ENCODE measurements at regions of chr11 and their contacts with region 1.

Region 1: DNA sequence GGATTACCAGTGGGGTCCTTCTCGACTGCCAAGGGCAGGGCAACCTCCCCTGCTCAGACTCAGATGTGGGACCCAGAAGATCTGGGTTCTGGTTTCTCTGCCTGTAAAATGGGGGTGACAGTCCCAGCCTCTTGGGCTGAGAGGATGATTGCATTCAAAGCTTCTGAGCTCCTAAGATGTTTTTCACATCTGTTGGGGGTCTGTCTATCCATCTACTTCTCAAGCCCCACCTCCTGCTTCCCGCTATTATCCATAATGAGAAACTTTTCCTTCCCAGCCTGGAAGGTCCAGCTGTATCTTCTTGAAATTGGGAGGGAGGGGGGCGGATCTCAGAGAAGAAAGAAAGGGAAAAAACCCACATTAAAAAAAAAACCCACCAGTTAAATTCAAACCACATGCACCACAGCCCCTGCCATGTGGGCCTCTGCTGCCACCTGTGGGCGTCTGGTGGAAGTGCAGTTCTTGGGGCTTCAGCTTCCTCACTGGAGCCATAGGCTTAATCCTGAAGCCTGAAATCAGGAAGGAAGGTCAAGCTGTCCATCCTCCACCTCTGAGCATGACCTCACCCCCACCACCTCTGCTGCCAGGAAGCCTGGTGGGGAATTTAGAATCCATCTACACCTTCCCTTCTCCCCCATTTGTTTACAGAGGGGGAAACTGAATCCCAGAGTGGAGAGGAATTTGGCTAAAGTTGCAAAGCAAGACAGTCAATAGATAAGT is 27.3 kb downstream of the ARHGEF17 start:
- DNase-seq: peak; percentile 88
- H3K4me3 ChIP-seq: no peak overlapping the region
- H3K27ac ChIP-seq: peak overlapping the region; percentile 70
- H3K4me1 ChIP-seq: peaks cover 33% of the 10 kb centered on the region
- H3K27me3 ChIP-seq: no peaks in the 10 kb centered on the region
- CTCF ChIP-seq: peak; percentile 95 to 96
- POLR2A ChIP-seq: no peak

Region 2: GRCh38 chr11:73126804-73127480 is 208.4 kb before region 1 on chr11:
- CTCF ChIA-PET with region 1: no interaction called
- POLR2A ChIA-PET with region 1: no interaction called
- dilution Hi-C with region 1: no loop called
- intact Hi-C with region 1: no loop called
- DNase-seq: no peak
- H3K4me3 ChIP-seq: no peak overlapping the region
- H3K27ac ChIP-seq: no peak overlapping the region
- H3K4me1 ChIP-seq: no peaks in the 10 kb centered on the region
- H3K27me3 ChIP-seq: no peaks in the 10 kb centered on the region
- CTCF ChIP-seq: no peak
- POLR2A ChIP-seq: no peak

Region 3: DNA sequence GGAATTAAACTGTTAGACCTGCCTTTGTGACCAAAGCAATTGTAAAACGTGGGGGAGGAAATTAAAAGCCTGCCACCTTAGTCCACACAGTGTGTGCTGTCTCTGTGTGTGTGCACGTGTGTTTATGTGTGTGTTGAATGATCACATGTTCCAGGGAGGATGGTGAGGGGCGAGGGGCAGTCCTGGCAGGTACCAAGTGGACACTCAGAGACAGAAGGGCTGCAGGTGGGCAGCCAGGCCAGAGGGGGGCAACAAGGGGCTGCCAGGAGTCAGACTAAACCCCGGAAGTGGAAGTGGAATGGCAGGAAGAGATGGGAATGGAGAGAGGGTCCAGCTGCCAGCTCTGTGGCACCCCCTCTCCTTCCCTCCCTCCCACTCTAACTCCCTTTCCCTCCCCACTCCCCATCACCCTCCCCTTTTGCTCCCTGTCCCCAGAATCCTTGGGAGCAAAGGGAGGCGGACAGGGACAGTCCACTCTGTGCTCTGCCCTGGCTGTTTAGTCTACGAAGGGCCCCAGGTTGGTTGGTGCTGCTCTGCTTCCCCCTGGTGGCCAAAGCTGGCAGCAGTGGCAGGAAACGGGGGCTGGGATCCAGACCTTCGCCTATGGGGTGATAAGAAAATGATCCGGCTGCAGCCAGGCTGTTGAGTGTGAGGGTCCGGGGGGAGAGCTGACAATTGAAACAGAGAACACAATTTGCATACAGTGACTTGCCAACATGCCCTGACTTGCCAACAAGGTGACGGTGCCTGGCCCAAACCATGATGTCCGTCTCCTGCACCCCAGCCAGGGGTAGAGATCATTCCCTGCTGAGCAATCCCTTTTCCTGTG is 92.9 kb before region 1 on chr11:
- CTCF ChIA-PET with region 1: interaction called, 8 read pairs
- POLR2A ChIA-PET with region 1: no interaction called
- dilution Hi-C with region 1: no loop called
- intact Hi-C with region 1: loop called (anchors 2 kb)
- DNase-seq: peak; percentile 84
- H3K4me3 ChIP-seq: no peak overlapping the region
- H3K27ac ChIP-seq: no peak overlapping the region
- H3K4me1 ChIP-seq: peaks cover 11% of the 10 kb centered on the region
- H3K27me3 ChIP-seq: no peaks in the 10 kb centered on the region
- CTCF ChIP-seq: peak; percentile 88 to 89
- POLR2A ChIP-seq: no peak

Region 4: GRCh38 chr11:73295231-73295995 is 40.0 kb before region 1 on chr11:
- CTCF ChIA-PET with region 1: interaction called, 89 read pairs
- POLR2A ChIA-PET with region 1: interaction called, 4 read pairs
- dilution Hi-C with region 1: no loop called
- intact Hi-C with region 1: loop called (anchors 1 kb)
- DNase-seq: peak; percentile 77
- H3K4me3 ChIP-seq: no peak overlapping the region
- H3K27ac ChIP-seq: no peak overlapping the region
- H3K4me1 ChIP-seq: peaks cover 2% of the 10 kb centered on the region
- H3K27me3 ChIP-seq: no peaks in the 10 kb centered on the region
- CTCF ChIP-seq: peak; percentile 95 to 96
- POLR2A ChIP-seq: no peak

Region 5: DNA sequence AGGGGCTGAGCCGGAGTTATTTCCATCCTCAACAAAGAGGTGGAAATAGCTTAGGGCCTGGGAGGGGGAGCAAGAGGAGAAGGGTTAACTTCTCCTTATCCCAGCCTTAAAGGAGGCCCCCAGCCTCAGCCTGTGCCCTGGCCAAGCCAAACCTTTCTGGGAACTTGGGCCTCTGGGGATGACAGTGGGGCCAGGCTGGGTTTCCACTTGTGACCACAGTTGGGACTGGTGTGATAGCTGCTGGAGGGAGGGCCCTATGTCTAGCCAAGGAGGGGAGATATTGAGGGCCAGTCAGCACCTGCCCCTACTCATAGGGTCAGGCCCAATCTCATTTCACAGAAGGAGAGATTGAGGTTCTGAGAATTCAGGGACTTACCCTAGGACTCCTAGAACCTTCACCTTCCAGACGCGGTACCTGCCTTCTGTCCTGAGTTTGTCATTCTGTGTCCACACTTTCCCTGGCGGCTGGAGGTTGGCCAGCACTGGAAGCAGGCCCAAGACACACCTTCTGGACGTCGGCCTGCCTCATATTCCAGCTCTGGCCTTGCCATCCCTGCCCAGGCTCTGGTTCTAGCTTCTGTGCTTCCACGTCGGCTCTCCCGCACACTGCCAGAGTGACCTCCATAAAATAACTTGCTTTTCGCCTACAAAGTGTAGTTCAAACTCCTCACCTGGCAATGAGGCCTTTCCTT is 44.0 kb after region 1 on chr11:
- CTCF ChIA-PET with region 1: no interaction called
- POLR2A ChIA-PET with region 1: no interaction called
- dilution Hi-C with region 1: no loop called
- intact Hi-C with region 1: no loop called
- DNase-seq: no peak
- H3K4me3 ChIP-seq: no peak overlapping the region
- H3K27ac ChIP-seq: no peak overlapping the region
- H3K4me1 ChIP-seq: peaks cover 15% of the 10 kb centered on the region
- H3K27me3 ChIP-seq: no peaks in the 10 kb centered on the region
- CTCF ChIP-seq: no peak
- POLR2A ChIP-seq: no peak

Measured in endothelial cell of umbilical vein (primary cell).